Calu3 (cell line): ENCODE measurements at regions of chr4 and their contacts with region 1.

Region 1: GRCh38 chr4:38620790-38621684 is 43.0 kb upstream of the KLF3 start:
- DNase-seq: peak; percentile 62
- H3K4me3 Mint-ChIP-seq: no peak overlapping the region
- H3K27ac Mint-ChIP-seq: peak overlapping the region; percentile 83
- H3K4me1 Mint-ChIP-seq: peaks cover 44% of the 10 kb centered on the region
- H3K27me3 Mint-ChIP-seq: no peaks in the 10 kb centered on the region
- CTCF ChIP-seq: no peak

Region 2: GRCh38 chr4:38449506-38450174 is 171.4 kb before region 1 on chr4:
- CTCF ChIA-PET with region 1: interaction called, 11 read pairs
- intact Hi-C with region 1: no loop called
- DNase-seq: peak; percentile 47
- H3K4me3 Mint-ChIP-seq: peak overlapping the region; percentile 37
- H3K27ac Mint-ChIP-seq: peak overlapping the region; percentile 78
- H3K4me1 Mint-ChIP-seq: peaks cover 15% of the 10 kb centered on the region
- H3K27me3 Mint-ChIP-seq: no peaks in the 10 kb centered on the region
- CTCF ChIP-seq: no peak

Region 3: DNA sequence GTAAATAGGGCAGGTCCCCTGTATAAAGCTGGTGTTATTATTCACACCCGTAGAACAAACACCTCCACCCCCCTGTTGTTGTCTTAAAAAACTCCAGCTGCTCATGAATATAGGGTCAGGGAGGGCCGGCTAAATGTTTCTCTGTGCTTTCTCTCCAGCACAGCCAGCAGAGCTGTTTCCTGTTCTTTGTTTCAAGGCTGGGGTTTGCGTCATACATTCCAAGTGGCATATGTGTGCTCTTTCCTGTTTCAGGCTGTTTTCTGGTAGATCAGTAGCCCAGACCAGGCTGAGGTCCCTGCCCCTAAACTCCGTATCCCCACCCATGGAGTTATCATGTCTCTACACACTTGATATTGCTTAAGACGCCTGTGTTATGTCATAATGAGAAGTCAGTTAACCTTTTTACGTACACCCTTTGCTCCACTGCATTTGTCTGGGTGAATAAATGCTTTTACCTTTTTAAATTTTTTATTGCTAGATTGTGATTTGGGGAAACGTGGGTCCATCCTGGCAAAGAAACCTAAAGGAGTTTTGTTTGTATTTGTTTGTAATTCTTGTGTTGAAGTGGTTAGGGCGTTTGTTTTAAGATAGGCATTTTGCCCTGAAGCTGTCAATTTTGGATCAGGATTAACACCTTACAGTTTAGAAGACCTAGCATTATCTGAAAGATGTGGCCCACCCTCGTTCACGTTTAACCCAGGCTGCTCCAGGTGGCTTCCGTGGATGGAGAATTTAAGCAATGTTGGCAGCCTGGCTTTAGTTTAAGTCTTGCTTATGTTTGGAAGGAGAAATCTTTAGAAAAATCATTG is 46.3 kb after region 1 on chr4:
- CTCF ChIA-PET with region 1: interaction called, 3 read pairs
- intact Hi-C with region 1: loop called (anchors 2 kb)
- DNase-seq: peak; percentile 79
- H3K4me3 Mint-ChIP-seq: peak overlapping the region; percentile 89
- H3K27ac Mint-ChIP-seq: peak overlapping the region; percentile 99
- H3K4me1 Mint-ChIP-seq: peaks cover 26% of the 10 kb centered on the region
- H3K27me3 Mint-ChIP-seq: no peaks in the 10 kb centered on the region
- CTCF ChIP-seq: no peak